Panc1 (cell line): ENCODE measurements at regions of chr3 and their contacts with region 1.

Region 1: GRCh38 chr3:161274719-161275298 is 53.7 kb downstream of the NMD3 start:
- DNase-seq: no peak
- ATAC-seq: no peak
- H3K4me3 ChIP-seq: no peak overlapping the region
- H3K27ac ChIP-seq: no peak overlapping the region
- H3K4me1 ChIP-seq: no peaks in the 10 kb centered on the region
- H3K27me3 ChIP-seq: no peaks in the 10 kb centered on the region
- CTCF ChIP-seq: peak; percentile 66

Region 2: GRCh38 chr3:161295325-161295724 is 20.5 kb after region 1 on chr3:
- CTCF ChIA-PET with region 1: no interaction called
- POLR2A ChIA-PET with region 1: no interaction called
- in situ Hi-C with region 1: no loop called
- intact Hi-C with region 1: no loop called
- DNase-seq: no peak
- ATAC-seq: no peak
- H3K4me3 ChIP-seq: no peak overlapping the region
- H3K27ac ChIP-seq: no peak overlapping the region
- H3K4me1 ChIP-seq: no peaks in the 10 kb centered on the region
- H3K27me3 ChIP-seq: no peaks in the 10 kb centered on the region
- CTCF ChIP-seq: no peak

Region 3: GRCh38 chr3:161409069-161409468 is 134.3 kb after region 1 on chr3:
- CTCF ChIA-PET with region 1: no interaction called
- POLR2A ChIA-PET with region 1: no interaction called
- in situ Hi-C with region 1: no loop called
- intact Hi-C with region 1: loop called (anchors 1 kb)
- DNase-seq: no peak
- ATAC-seq: no peak
- H3K4me3 ChIP-seq: no peak overlapping the region
- H3K27ac ChIP-seq: peak overlapping the region; percentile 36; the same call in 1 of the 2 replicates
- H3K4me1 ChIP-seq: peaks cover 17% of the 10 kb centered on the region; the same call in 1 of the 2 replicates
- H3K27me3 ChIP-seq: no peaks in the 10 kb centered on the region
- CTCF ChIP-seq: peak; percentile 72; the same call in 1 of the 2 replicates